ENCODE measurements at regions of chr7 and their contacts with region 1.

Region 1: DNA sequence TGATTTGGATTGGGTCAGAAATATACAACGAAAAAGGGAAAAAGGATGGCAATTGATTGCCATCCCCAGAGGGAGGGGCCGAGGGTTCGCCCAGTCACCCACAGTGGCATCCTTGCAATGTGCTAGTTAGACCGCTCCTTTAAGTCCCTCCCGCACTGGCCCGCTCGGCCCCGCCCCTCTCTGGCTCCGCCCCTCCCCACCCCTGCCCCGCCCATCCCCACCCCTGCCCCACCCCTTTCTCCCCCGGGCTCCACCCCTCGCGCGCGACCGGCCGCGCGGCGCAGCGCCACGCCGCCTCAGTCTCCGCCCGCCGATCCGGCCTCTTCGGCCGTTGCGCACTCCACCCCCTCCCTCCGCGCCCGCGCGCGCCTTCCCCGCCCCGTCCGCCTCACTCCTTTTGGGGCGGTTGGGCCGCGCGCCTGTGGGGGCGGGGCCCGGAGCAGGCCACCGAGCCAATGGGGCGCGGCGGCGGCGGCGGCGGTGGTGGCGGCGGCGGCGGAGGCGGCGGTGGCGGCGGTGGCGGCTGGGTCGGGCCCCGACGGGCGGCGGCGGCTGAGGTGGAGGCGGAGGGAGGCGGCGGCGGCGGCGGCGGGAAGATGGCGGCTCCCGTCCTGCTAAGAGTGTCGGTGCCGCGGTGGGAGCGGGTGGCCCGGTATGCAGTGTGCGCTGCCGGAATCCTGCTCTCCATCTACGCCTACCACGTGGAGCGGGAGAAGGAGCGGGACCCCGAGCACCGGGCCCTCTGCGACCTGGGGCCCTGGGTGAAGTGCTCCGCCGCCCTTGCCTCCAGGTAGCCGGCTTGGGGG is at the start of gene VKORC1L1:
- DNase-seq: peak; percentile 91
- ATAC-seq: peak; percentile 94
- H3K4me3 Mint-ChIP-seq: peak within 1 kb of the TSS; percentile 82
- H3K27ac Mint-ChIP-seq: peak within 1 kb of the TSS; percentile 50
- H3K4me1 Mint-ChIP-seq: peaks cover 8% of the 10 kb centered on the region
- H3K27me3 Mint-ChIP-seq: no peaks in the 10 kb centered on the region
- CTCF ChIP-seq: no peak
- total RNA-seq, gene VKORC1L1: 8.6 and 9.3 TPM in 2 replicates

Region 2: GRCh38 chr7:65750511-65751344 is 122.3 kb before region 1 on chr7:
- CTCF ChIA-PET with region 1: no interaction called
- POLR2A ChIA-PET with region 1: no interaction called
- intact Hi-C with region 1: loop called (anchors 1 kb)
- DNase-seq: peak; percentile 83
- ATAC-seq: peak; percentile 99
- H3K4me3 Mint-ChIP-seq: peak overlapping the region; percentile 96
- H3K27ac Mint-ChIP-seq: peak overlapping the region; percentile 94
- H3K4me1 Mint-ChIP-seq: peaks cover 15% of the 10 kb centered on the region
- H3K27me3 Mint-ChIP-seq: no peaks in the 10 kb centered on the region
- CTCF ChIP-seq: no peak

Region 3: GRCh38 chr7:65915921-65916657 is 43.1 kb after region 1 on chr7:
- CTCF ChIA-PET with region 1: no interaction called
- POLR2A ChIA-PET with region 1: interaction called, 17 read pairs
- intact Hi-C with region 1: loop called (anchors 5 kb)
- DNase-seq: no peak
- ATAC-seq: peak; percentile 75
- H3K4me3 Mint-ChIP-seq: no peak overlapping the region
- H3K27ac Mint-ChIP-seq: no peak overlapping the region
- H3K4me1 Mint-ChIP-seq: peaks cover 25% of the 10 kb centered on the region
- H3K27me3 Mint-ChIP-seq: no peaks in the 10 kb centered on the region
- CTCF ChIP-seq: no peak

Region 4: GRCh38 chr7:66075590-66076461 is 202.8 kb after region 1 on chr7 and contains the start of gene ASL:
- CTCF ChIA-PET with region 1: no interaction called
- POLR2A ChIA-PET with region 1: no interaction called
- intact Hi-C with region 1: loop called (anchors 1 kb)
- DNase-seq: peak; percentile 94
- ATAC-seq: peak; percentile 98
- H3K4me3 Mint-ChIP-seq: peak within 1 kb of the TSS; percentile 86
- H3K27ac Mint-ChIP-seq: peak within 1 kb of the TSS; percentile 73
- H3K4me1 Mint-ChIP-seq: peaks cover 21% of the 10 kb centered on the region
- H3K27me3 Mint-ChIP-seq: no peaks in the 10 kb centered on the region
- CTCF ChIP-seq: no peak
- total RNA-seq, gene ASL: 39.6 and 39.8 TPM in 2 replicates

Region 5: GRCh38 chr7:66138994-66139752 is 266.2 kb after region 1 on chr7:
- CTCF ChIA-PET with region 1: no interaction called
- POLR2A ChIA-PET with region 1: no interaction called
- intact Hi-C with region 1: no loop called
- DNase-seq: no peak
- ATAC-seq: no peak
- H3K4me3 Mint-ChIP-seq: no peak overlapping the region
- H3K27ac Mint-ChIP-seq: no peak overlapping the region
- H3K4me1 Mint-ChIP-seq: no peaks in the 10 kb centered on the region
- H3K27me3 Mint-ChIP-seq: no peaks in the 10 kb centered on the region
- CTCF ChIP-seq: no peak

Region 6: GRCh38 chr7:67302113-67303039 is 1429.4 kb after region 1 on chr7:
- CTCF ChIA-PET with region 1: no interaction called
- POLR2A ChIA-PET with region 1: no interaction called
- intact Hi-C with region 1: loop called (anchors 10 kb)
- DNase-seq: peak; percentile 95
- ATAC-seq: peak; percentile 86
- H3K4me3 Mint-ChIP-seq: peak overlapping the region; percentile 93
- H3K27ac Mint-ChIP-seq: peak overlapping the region; percentile 94
- H3K4me1 Mint-ChIP-seq: peaks cover 31% of the 10 kb centered on the region
- H3K27me3 Mint-ChIP-seq: no peaks in the 10 kb centered on the region
- CTCF ChIP-seq: no peak